ENCODE measurements at regions of chr2 and their contacts with region 1.

Region 1: GRCh38 chr2:117835990-117836760 is 21.7 kb downstream of the DDX18 start:
- DNase-seq: peak; percentile 75 to 90 (median 83)
- H3K4me3 ChIP-seq: peak overlapping the region; percentile 53
- H3K27ac ChIP-seq: peak overlapping the region in 1 of 2 donors; percentile 14
- H3K4me1 ChIP-seq: peaks cover 2% of the 10 kb centered on the region
- H3K27me3 ChIP-seq: no peaks in the 10 kb centered on the region
- CTCF ChIP-seq: peak; percentile 38 to 53 (median 50)
- EP300 ChIP-seq: no peak
- POLR2A ChIP-seq: no peak

Region 2: DNA sequence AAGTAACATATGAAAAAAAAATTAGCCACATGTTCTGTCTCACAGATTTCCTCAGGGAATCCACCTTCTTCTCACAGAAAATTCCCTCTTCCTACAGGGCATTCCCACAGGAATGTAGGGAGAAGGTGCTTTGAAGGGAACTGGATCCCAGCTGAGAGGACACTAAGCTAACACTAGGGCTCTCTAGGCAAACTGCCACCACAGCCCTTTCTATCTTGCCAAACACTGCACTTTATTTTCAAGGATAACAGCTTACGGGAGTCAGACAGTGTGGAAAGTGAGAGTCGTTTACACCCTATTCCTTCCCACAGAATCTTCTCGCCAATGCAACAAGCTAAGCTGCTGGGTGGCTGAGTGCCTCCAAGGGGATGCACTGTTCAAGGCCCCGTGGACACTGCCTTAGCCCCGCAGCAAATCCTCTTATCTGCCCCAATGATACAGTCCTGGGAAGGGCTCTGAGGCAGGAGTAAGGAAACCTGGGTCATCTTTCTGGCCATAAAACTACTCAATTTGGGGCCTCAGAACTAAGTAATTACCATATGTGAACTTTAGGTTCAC is 100.8 kb after region 1 on chr2:
- intact Hi-C with region 1: loop called in 1 of 4 experiments (anchors 10 kb)
- DNase-seq: peak in 3 of 5 donors; percentile 28 to 41 (median 31)
- H3K4me3 ChIP-seq: no peak overlapping the region
- H3K27ac ChIP-seq: no peak overlapping the region
- H3K4me1 ChIP-seq: no peaks in the 10 kb centered on the region
- H3K27me3 ChIP-seq: no peaks in the 10 kb centered on the region
- CTCF ChIP-seq: no peak
- EP300 ChIP-seq: no peak
- POLR2A ChIP-seq: no peak

Region 3: GRCh38 chr2:118003396-118003824 is 167.2 kb after region 1 on chr2:
- intact Hi-C with region 1: loop called in 2 of 4 experiments (anchors 5 kb)
- DNase-seq: peak in 3 of 5 donors; percentile 16 to 48 (median 22)
- H3K4me3 ChIP-seq: no peak overlapping the region
- H3K27ac ChIP-seq: no peak overlapping the region
- H3K4me1 ChIP-seq: no peaks in the 10 kb centered on the region
- H3K27me3 ChIP-seq: no peaks in the 10 kb centered on the region
- CTCF ChIP-seq: peak; percentile 52 to 81 (median 72)
- EP300 ChIP-seq: no peak
- POLR2A ChIP-seq: no peak

Measured in ovary (tissue), 10 donors.